H1 (cell line): ENCODE measurements at regions of chr17 and their contacts with region 1.

Region 1: DNA sequence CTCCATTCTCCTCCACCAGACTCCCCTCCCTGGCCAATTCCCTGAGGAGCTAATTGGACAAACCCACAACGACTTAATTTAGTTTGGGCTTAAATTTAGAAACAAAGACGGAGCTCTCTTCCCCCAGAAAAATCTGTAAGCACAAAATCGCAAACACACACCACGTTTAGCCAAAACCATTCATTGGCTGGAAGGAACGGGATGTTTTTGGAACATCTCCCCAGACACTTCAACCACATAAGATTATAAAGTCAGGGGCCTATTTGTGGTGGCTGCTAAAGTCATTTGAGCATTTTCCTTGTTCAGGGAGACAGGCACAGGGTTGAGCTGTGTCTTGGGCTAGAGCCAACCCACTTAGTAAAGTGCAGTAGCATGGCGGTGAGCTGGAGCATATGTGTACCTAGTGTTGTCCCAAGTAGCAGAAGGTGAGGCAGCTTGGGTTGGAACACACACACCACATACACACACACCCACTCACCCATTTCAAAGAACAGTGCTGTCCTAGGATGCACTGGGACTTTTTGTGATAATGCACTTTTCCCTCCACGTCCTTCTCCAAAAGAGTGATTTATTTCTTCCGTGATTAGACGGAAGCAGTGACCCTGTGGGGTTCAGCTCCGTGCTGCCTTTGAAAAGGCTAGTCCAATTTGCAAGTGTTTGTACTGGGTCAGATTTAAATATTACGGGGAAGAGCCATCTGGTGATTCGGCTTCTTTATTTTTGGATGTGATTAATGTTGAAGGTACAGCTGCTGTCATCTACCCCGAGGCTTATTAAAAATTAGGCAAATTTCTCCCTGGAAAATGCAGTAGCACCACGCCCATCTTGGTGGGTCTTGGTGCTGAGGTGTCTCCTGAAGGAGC is 32.2 kb downstream of the ELAC2 start:
- DNase-seq: no peak
- H3K4me3 ChIP-seq: no peak overlapping the region
- H3K27ac ChIP-seq: no peak overlapping the region
- H3K4me1 ChIP-seq: peaks cover 0 to 17% (median 6%) of the 10 kb centered on the region in 4 experiments; a peak in 5 of 7 replicates
- H3K27me3 ChIP-seq: no peaks in the 10 kb centered on the region
- CTCF ChIP-seq: no peak
- EP300 ChIP-seq: no peak
- POLR2A ChIP-seq: no peak
- RAD21 ChIP-seq: no peak

Region 2: GRCh38 chr17:12974005-12974531 is 11.6 kb before region 1 on chr17:
- CTCF ChIA-PET with region 1: interaction called, 4 read pairs
- POLR2A ChIA-PET with region 1: interaction called, 27 read pairs
- DNase-seq: no peak
- H3K4me3 ChIP-seq: peak overlapping the region; percentile 35 to 72 (median 48)
- H3K27ac ChIP-seq: no peak overlapping the region
- H3K4me1 ChIP-seq: peaks cover 6 to 18% (median 11%) of the 10 kb centered on the region in 4 experiments
- H3K27me3 ChIP-seq: no peaks in the 10 kb centered on the region
- CTCF ChIP-seq: no peak
- EP300 ChIP-seq: no peak
- POLR2A ChIP-seq: no peak
- RAD21 ChIP-seq: no peak

Region 3: DNA sequence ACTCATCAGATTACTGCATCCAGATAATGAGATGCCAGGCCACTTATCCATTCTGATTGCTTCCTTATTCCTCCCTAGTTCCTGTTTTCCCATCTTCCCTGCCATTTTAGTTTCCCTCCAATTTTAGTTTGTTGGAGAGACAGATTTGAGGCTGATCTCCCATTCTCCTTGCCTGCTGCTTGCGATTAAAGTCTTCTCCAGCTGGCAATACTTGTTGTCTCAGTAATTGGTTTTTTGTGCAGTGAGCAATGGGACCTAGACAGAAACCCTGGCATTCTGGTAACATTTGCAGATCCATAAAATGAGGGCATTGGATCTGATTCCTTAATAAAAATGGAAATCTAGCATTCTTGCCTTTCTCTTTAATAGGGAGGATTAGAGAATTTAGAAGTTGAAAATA is 49.8 kb after region 1 on chr17:
- CTCF ChIA-PET with region 1: no interaction called
- POLR2A ChIA-PET with region 1: no interaction called
- DNase-seq: no peak
- H3K4me3 ChIP-seq: no peak overlapping the region
- H3K27ac ChIP-seq: no peak overlapping the region
- H3K4me1 ChIP-seq: no peaks in the 10 kb centered on the region
- H3K27me3 ChIP-seq: no peaks in the 10 kb centered on the region
- CTCF ChIP-seq: no peak
- EP300 ChIP-seq: no peak
- POLR2A ChIP-seq: no peak
- RAD21 ChIP-seq: no peak

Region 4: GRCh38 chr17:13129356-13129755 is 143.7 kb after region 1 on chr17:
- CTCF ChIA-PET with region 1: no interaction called
- POLR2A ChIA-PET with region 1: no interaction called
- DNase-seq: no peak
- H3K4me3 ChIP-seq: no peak overlapping the region
- H3K27ac ChIP-seq: no peak overlapping the region
- H3K4me1 ChIP-seq: no peaks in the 10 kb centered on the region
- H3K27me3 ChIP-seq: no peaks in the 10 kb centered on the region
- CTCF ChIP-seq: no peak
- EP300 ChIP-seq: no peak
- POLR2A ChIP-seq: no peak
- RAD21 ChIP-seq: no peak

Region 5: DNA sequence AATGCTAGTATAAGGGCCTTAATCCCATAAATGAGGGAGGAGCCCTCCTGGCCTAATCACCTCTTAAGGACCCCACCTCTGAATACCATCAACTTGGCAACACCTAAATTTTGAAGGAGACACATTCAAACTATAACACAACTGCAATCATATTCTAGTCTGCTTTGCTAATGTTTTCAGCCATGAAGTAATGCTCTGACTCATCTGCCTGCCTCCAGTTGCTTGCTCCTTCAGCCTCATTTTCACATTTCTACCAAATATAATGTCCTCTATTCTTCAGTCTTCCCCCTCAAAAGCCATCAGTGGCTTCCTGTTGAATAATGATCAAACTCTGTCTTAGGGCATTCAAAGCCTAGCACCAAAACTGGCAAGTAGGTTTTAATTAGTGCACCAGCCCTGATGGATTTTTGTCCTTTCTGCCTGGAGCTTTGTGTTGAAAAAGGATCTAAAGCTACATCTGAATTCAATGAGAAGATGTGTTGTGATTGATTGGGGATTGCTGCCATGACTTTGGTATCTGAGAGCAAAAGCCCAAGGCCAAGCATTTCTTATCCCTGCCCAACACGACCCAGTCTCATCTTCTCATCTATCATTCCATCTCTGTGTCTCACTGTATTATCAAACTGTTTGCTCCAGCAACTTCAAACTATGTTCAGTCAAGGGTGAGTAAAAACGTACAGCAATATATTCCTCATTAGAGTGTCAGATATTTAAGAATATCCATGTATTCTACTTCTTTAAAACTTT is 173.0 kb after region 1 on chr17:
- CTCF ChIA-PET with region 1: no interaction called
- POLR2A ChIA-PET with region 1: no interaction called
- DNase-seq: no peak
- H3K4me3 ChIP-seq: no peak overlapping the region
- H3K27ac ChIP-seq: no peak overlapping the region
- H3K4me1 ChIP-seq: no peaks in the 10 kb centered on the region
- H3K27me3 ChIP-seq: no peaks in the 10 kb centered on the region
- CTCF ChIP-seq: no peak
- EP300 ChIP-seq: no peak
- POLR2A ChIP-seq: no peak
- RAD21 ChIP-seq: no peak